ENCODE measurements at regions of chr6 and their contacts with region 1.

Region 1: GRCh38 chr6:43075670-43076463 is at the start of gene PTK7:
- DNase-seq: no peak
- ATAC-seq: peak; percentile 86
- H3K4me3 ChIP-seq: peak within 1 kb of the TSS; percentile 90 to 91
- H3K27ac ChIP-seq: peak within 1 kb of the TSS; percentile 91
- H3K4me1 ChIP-seq: peaks cover 25% of the 10 kb centered on the region
- H3K27me3 ChIP-seq: no peaks in the 10 kb centered on the region
- CTCF ChIP-seq: no peak
- total RNA-seq, gene PTK7: 240 TPM

Region 2: GRCh38 chr6:42996513-42996912 is 79.4 kb before region 1 on chr6:
- CTCF ChIA-PET with region 1: no interaction called
- POLR2A ChIA-PET with region 1: no interaction called
- in situ Hi-C with region 1: no loop called
- intact Hi-C with region 1: no loop called
- DNase-seq: no peak
- ATAC-seq: no peak
- H3K4me3 ChIP-seq: no peak overlapping the region
- H3K27ac ChIP-seq: no peak overlapping the region
- H3K4me1 ChIP-seq: no peaks in the 10 kb centered on the region
- H3K27me3 ChIP-seq: no peaks in the 10 kb centered on the region
- CTCF ChIP-seq: no peak

Region 3: DNA sequence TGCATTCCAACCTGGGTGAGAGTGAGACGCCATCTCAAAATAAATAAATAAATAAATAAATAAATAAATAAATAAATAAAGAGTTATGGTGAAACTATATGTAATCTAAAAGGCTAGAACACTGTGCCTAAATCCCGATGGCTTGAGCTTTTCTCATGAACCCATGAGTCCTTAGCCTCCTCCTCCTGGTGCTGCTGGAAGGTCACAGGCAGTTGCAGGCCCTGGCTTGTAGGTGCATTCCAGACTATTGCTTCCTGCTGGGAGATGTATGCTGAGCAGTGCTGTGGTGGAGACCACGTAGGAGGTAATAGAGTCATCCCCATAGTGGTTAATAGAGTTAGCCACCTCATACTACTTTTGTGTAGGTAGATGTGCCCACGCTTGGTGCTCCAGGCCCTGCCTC is 12.8 kb after region 1 on chr6:
- CTCF ChIA-PET with region 1: no interaction called
- POLR2A ChIA-PET with region 1: interaction called, 18 read pairs
- in situ Hi-C with region 1: no loop called
- intact Hi-C with region 1: no loop called
- DNase-seq: no peak
- ATAC-seq: peak; percentile 22; the same call in 1 of the 2 replicates
- H3K4me3 ChIP-seq: no peak overlapping the region
- H3K27ac ChIP-seq: peak overlapping the region; percentile 97
- H3K4me1 ChIP-seq: peaks cover 68% of the 10 kb centered on the region
- H3K27me3 ChIP-seq: no peaks in the 10 kb centered on the region
- CTCF ChIP-seq: no peak

Region 4: DNA sequence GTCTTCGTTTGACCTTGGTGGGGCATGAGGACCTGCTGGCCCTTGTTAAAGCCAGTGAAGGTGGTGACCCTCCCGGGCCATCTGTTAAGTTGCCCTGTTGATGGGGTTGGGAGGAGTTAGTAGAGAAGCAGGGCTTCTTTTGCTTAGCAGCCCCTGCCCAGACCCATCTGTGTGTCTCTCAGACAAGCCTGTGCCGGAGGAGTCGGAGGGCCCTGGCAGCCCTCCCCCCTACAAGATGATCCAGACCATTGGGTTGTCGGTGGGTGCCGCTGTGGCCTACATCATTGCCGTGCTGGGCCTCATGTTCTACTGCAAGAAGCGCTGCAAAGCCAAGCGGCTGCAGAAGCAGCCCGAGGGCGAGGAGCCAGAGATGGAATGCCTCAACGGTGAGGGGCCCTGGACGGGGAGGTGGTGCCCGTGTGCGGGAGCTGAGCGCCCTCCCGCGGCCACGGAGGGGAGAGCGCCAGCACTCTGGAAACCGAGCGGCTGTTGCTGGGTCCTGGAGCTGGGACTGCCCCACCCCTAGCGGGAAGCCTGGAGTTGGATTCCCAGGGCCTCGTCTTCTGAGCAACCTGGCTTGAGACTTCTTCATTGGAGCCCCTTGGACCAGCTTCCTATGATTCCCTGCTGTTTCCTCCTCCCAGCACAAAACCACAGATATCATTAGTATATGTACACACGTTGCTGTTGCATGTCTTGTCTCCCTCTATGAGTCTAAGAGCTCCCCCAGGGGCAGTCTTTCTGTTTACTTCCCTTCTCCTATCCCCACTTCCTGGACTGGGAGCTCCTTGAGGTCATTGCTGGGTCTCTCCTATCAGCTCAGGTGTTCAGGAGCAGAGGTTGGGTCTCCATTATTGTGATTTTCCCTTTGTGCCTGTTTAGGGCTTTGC is 67.6 kb after region 1 on chr6:
- CTCF ChIA-PET with region 1: interaction called, 3 read pairs
- POLR2A ChIA-PET with region 1: no interaction called
- in situ Hi-C with region 1: no loop called
- intact Hi-C with region 1: loop called (anchors 5 kb)
- DNase-seq: no peak
- ATAC-seq: peak; percentile 97
- H3K4me3 ChIP-seq: no peak overlapping the region
- H3K27ac ChIP-seq: peak overlapping the region; percentile 60
- H3K4me1 ChIP-seq: peaks cover 17% of the 10 kb centered on the region
- H3K27me3 ChIP-seq: no peaks in the 10 kb centered on the region
- CTCF ChIP-seq: peak; percentile 97